Activated CD8-positive, alpha-beta T cell treated with anti-CD3 and anti-CD28 coated beads for 36 hours (primary cell): ENCODE measurements at regions of chr3 and their contacts with region 1.

Region 1: DNA sequence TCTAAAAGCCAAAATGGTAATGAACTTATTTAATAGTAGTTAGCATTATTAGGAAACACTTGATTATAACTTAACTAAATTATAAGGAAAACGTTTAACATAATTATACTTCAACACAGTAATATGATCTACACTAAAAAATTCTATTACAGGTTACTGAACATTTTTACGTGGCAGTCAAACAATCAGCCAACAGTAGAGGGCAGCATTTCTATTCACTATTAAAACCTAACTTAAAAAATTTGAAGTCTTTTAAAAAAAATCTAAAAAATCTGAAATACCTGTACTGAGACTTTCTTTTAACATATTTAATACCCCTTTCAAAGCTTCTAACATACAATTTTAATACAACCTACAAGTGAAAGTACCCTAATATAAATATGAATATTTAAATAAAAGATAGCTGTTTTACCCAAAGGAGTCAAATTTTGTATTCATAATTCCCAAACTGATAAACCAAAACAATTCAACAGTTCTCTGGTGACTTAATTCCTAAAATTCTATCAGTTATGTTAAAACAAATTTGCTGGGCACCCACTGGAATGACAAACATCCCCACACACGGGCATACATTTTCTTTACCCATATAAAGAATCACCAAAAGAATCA is 41.5 kb downstream of the DLG1 start:
- DNase-seq: peak; percentile 65
- ATAC-seq: no peak
- H3K4me3 Mint-ChIP-seq: no peak overlapping the region
- H3K27ac Mint-ChIP-seq: no peak overlapping the region
- H3K4me1 Mint-ChIP-seq: peaks cover 73% of the 10 kb centered on the region
- H3K27me3 Mint-ChIP-seq: no peaks in the 10 kb centered on the region
- CTCF ChIP-seq: peak; percentile 79

Region 2: DNA sequence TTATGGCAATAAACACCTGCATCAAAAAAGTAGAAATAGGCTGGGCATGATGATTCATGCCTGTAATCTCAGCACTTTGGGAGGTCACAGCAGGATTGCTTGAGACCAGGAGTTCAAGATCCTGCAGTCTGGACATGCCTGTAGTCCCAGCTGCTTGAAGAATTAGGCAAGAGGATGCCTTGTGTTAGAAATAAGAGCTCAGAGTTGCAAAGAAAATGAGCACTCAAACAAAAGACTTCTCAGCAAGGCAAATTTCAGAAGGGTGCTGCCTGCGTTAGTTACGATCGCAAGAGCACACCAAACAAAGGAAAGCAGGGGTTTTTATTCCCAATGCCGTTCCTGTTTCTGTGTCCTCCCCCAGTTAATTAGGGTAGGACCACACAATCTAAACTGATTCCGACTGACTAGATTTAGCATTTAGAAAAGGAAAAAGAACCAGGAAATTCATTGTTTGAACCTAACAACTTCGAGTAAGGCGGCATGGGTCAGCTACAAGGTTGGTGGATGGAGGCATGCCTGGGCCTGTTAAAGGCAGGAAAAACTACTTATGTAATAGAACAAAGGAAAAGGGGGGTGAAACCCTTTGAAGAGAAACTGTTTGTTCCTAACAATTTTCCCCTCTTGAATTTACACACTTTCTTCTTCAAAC is 14.0 kb before region 1 on chr3:
- CTCF ChIA-PET with region 1: interaction called, 13 read pairs
- POLR2A ChIA-PET with region 1: no interaction called
- intact Hi-C with region 1: no loop called
- DNase-seq: no peak
- ATAC-seq: no peak
- H3K4me3 Mint-ChIP-seq: no peak overlapping the region
- H3K27ac Mint-ChIP-seq: no peak overlapping the region
- H3K4me1 Mint-ChIP-seq: peaks cover 34% of the 10 kb centered on the region
- H3K27me3 Mint-ChIP-seq: no peaks in the 10 kb centered on the region
- CTCF ChIP-seq: no peak

Region 3: DNA sequence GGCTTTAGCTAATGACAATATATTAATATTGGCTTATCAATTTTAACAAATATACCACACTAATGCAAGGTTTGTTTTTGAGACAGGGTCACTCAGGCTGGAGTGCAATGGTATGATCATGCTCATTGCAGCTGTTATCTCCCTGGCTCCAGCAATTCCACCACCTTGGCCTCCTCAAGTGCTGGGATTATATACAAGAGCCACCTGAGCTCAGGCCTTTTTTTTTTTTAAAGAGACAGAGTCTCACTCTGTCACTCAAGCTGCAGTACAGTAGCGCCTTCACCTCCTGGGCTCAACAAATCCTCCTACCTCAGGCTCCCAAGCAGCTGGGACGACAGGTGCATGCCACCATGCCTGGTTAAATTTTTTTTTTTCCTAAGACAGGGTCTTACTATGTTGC is 29.7 kb after region 1 on chr3:
- CTCF ChIA-PET with region 1: interaction called, 12 read pairs
- POLR2A ChIA-PET with region 1: interaction called, 3 read pairs
- intact Hi-C with region 1: no loop called
- DNase-seq: no peak
- ATAC-seq: no peak
- H3K4me3 Mint-ChIP-seq: no peak overlapping the region
- H3K27ac Mint-ChIP-seq: no peak overlapping the region
- H3K4me1 Mint-ChIP-seq: peaks cover 29% of the 10 kb centered on the region
- H3K27me3 Mint-ChIP-seq: no peaks in the 10 kb centered on the region
- CTCF ChIP-seq: no peak

Region 4: DNA sequence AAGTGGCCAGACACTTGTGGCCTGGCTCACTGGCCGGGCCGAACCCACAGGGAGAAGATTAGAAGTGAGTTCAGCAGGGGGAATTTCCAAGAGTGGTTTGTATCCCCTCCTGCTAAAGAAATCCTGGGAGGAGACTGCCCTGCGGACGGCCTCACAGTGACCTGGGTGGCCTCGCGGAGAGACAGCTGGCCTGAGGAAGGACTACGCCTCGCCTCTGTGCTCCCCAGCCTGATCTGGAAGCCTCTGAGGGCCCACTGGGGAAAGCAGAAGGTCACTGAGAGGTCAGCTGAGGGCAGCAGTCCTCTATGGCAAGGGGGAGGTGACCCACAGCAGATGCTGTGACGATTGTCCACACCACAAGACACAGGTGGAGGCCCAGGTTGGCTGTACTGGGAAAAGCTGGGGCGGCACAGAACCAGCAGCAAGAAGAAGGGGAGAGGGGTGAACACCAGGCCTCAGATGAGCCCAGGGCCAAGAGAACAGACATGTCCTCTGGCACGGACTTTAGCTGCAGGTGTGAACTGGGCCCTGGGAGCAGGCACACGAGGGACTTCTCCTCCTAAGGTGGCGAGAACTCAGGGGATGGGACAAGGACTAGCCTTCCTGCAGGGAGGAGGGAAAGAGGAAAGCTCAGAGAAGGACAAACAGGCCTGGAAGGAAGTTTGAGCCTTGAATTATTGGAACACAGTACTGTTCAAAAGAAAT is 78.6 kb after region 1 on chr3:
- CTCF ChIA-PET with region 1: interaction called, 10 read pairs
- POLR2A ChIA-PET with region 1: no interaction called
- intact Hi-C with region 1: no loop called
- DNase-seq: no peak
- ATAC-seq: no peak
- H3K4me3 Mint-ChIP-seq: no peak overlapping the region
- H3K27ac Mint-ChIP-seq: no peak overlapping the region
- H3K4me1 Mint-ChIP-seq: no peaks in the 10 kb centered on the region
- H3K27me3 Mint-ChIP-seq: peaks cover 9% of the 10 kb centered on the region
- CTCF ChIP-seq: no peak

Region 5: GRCh38 chr3:197501879-197502620 is 245.1 kb after region 1 on chr3:
- CTCF ChIA-PET with region 1: interaction called, 60 read pairs
- POLR2A ChIA-PET with region 1: interaction called, 3 read pairs
- intact Hi-C with region 1: loop called (anchors 5 kb)
- DNase-seq: peak; percentile 74
- ATAC-seq: peak; percentile 88
- H3K4me3 Mint-ChIP-seq: no peak overlapping the region
- H3K27ac Mint-ChIP-seq: no peak overlapping the region
- H3K4me1 Mint-ChIP-seq: no peaks in the 10 kb centered on the region
- H3K27me3 Mint-ChIP-seq: no peaks in the 10 kb centered on the region
- CTCF ChIP-seq: peak; percentile 67

Region 6: DNA sequence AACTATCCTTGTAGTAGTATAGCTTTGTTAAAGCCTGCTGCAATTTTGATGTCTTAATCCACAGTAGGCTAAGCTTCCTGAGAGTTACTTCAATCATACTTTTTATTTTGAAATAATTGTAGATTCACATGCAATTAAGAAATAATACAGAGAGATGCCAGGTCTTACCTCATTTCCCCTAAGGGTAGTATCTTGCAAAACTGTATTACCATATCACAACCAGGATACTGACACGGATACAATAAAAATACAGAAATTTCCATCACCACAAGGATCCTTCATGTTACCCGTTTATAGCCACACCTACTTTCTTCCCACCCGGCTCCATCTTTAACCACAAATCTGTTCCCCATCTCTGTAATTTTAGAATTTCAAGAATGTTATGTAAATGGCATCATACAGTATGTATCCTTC is 277.0 kb after region 1 on chr3:
- CTCF ChIA-PET with region 1: no interaction called
- POLR2A ChIA-PET with region 1: no interaction called
- intact Hi-C with region 1: no loop called
- DNase-seq: no peak
- ATAC-seq: no peak
- H3K4me3 Mint-ChIP-seq: no peak overlapping the region
- H3K27ac Mint-ChIP-seq: no peak overlapping the region
- H3K4me1 Mint-ChIP-seq: no peaks in the 10 kb centered on the region
- H3K27me3 Mint-ChIP-seq: no peaks in the 10 kb centered on the region
- CTCF ChIP-seq: no peak